ENCODE measurements at regions of chr19 and their contacts with region 1.

Region 1: GRCh38 chr19:58261968-58262921 is 16.5 kb upstream of the ZNF8 start:
- DNase-seq: no peak
- ATAC-seq: no peak
- H3K4me3 Mint-ChIP-seq: no peak overlapping the region
- H3K27ac Mint-ChIP-seq: no peak overlapping the region
- H3K4me1 Mint-ChIP-seq: no peaks in the 10 kb centered on the region
- H3K27me3 Mint-ChIP-seq: no peaks in the 10 kb centered on the region

Region 2: DNA sequence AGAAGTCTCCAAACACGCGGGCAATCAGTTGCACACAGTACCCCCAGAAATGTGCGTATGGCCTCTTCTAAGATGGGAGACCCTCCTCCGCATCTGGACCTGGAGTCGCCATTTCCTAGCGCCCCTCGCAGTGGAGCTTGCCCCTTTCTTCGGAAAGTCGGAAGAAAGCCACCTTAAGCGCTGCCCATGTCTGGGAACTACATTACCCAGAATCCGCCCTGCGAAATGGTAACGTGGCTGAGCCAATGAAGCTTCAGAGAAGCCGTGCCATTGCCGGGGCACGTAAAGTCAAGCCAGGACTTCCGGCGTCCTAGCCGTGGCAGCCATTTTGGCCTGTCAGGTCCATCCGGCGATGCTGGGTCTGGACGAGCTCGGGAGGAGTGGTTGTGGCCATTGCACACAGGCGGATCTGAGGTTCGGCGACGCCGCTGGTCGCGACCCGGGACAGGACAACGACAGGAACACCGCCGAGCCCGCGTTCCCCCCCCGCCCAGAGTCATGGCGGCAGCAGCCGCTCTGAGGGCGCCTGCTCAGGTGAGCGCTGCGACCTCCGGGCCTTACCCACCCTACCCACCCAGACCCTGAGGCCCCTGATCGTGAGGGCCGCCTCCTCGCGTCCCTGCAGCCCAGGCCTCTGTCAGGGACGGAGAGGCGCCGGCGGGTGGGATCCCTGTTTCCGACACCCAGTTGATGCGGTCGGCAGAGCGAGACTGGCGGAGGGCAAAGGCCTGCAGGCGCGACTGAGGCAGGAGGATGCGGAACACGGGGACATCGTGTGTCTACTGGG is 492.7 kb before region 1 on chr19 and contains the start of gene ZNF586:
- CTCF ChIA-PET with region 1: no interaction called
- POLR2A ChIA-PET with region 1: no interaction called
- intact Hi-C with region 1: loop called in 1 of 2 experiments (anchors 10 kb)
- DNase-seq: peak; percentile 93
- ATAC-seq: peak; percentile 99
- H3K4me3 Mint-ChIP-seq: peak within 1 kb of the TSS; percentile 90
- H3K27ac Mint-ChIP-seq: peak within 1 kb of the TSS; percentile 93
- H3K4me1 Mint-ChIP-seq: peaks cover 25% of the 10 kb centered on the region
- H3K27me3 Mint-ChIP-seq: no peaks in the 10 kb centered on the region
- total RNA-seq, gene ZNF586: 20.3 to 20.5 TPM

Region 3: GRCh38 chr19:58129284-58129683 is 133.0 kb before region 1 on chr19:
- CTCF ChIA-PET with region 1: no interaction called
- POLR2A ChIA-PET with region 1: no interaction called
- intact Hi-C with region 1: no loop called
- DNase-seq: no peak
- ATAC-seq: no peak
- H3K4me3 Mint-ChIP-seq: no peak overlapping the region
- H3K27ac Mint-ChIP-seq: no peak overlapping the region
- H3K4me1 Mint-ChIP-seq: no peaks in the 10 kb centered on the region
- H3K27me3 Mint-ChIP-seq: no peaks in the 10 kb centered on the region

Region 4: GRCh38 chr19:58196901-58197616 is 65.2 kb before region 1 on chr19:
- CTCF ChIA-PET with region 1: no interaction called
- POLR2A ChIA-PET with region 1: no interaction called
- intact Hi-C with region 1: loop called in 1 of 2 experiments (anchors 5 kb)
- DNase-seq: no peak
- ATAC-seq: no peak
- H3K4me3 Mint-ChIP-seq: no peak overlapping the region
- H3K27ac Mint-ChIP-seq: no peak overlapping the region
- H3K4me1 Mint-ChIP-seq: no peaks in the 10 kb centered on the region
- H3K27me3 Mint-ChIP-seq: no peaks in the 10 kb centered on the region

Region 5: GRCh38 chr19:58243351-58243750 is 18.9 kb before region 1 on chr19:
- CTCF ChIA-PET with region 1: no interaction called
- POLR2A ChIA-PET with region 1: no interaction called
- intact Hi-C with region 1: no loop called
- DNase-seq: no peak
- ATAC-seq: no peak
- H3K4me3 Mint-ChIP-seq: no peak overlapping the region
- H3K27ac Mint-ChIP-seq: no peak overlapping the region
- H3K4me1 Mint-ChIP-seq: peaks cover under 1% of the 10 kb centered on the region
- H3K27me3 Mint-ChIP-seq: no peaks in the 10 kb centered on the region

Measured in activated CD4-positive, alpha-beta T cell treated with anti-CD3 and anti-CD28 coated beads for 36 hours (primary cell).